ENCODE measurements at regions of chr4 and their contacts with region 1.

Region 1: DNA sequence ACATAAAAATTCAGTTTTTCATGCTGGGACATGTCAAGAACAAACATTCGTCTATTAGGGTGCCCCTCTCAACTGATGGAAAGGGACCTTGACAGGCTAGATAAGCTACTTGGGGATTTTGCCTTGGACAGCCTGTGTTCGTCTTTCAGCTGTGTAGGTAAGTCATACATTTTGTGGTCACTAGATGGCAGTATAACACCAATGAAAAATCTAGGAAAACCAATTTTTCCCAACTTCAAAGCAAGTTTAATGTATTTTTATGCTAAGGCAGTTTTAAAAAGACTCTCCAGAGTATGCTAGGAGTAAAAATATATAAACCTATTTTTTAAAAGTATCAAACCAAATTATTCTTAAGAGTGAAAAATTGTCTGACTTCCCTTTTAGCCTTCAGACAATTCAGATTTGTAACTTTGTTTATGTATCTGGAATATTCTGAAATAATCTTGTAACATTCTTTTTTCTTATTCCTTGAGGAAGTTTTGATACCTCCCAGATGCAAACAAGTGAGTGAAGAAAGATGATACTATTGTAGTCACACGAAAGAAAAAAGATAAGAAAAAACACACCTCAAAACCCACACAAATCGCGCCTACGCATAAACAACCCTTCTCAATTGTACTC is 158.3 kb downstream of the CPE start:
- DNase-seq: no peak
- H3K4me3 ChIP-seq: no peak overlapping the region
- H3K27ac ChIP-seq: no peak overlapping the region
- H3K4me1 ChIP-seq: no peaks in the 10 kb centered on the region
- H3K27me3 ChIP-seq: no peaks in the 10 kb centered on the region
- CTCF ChIP-seq: peak; percentile 29 to 81 (median 73)

Region 2: DNA sequence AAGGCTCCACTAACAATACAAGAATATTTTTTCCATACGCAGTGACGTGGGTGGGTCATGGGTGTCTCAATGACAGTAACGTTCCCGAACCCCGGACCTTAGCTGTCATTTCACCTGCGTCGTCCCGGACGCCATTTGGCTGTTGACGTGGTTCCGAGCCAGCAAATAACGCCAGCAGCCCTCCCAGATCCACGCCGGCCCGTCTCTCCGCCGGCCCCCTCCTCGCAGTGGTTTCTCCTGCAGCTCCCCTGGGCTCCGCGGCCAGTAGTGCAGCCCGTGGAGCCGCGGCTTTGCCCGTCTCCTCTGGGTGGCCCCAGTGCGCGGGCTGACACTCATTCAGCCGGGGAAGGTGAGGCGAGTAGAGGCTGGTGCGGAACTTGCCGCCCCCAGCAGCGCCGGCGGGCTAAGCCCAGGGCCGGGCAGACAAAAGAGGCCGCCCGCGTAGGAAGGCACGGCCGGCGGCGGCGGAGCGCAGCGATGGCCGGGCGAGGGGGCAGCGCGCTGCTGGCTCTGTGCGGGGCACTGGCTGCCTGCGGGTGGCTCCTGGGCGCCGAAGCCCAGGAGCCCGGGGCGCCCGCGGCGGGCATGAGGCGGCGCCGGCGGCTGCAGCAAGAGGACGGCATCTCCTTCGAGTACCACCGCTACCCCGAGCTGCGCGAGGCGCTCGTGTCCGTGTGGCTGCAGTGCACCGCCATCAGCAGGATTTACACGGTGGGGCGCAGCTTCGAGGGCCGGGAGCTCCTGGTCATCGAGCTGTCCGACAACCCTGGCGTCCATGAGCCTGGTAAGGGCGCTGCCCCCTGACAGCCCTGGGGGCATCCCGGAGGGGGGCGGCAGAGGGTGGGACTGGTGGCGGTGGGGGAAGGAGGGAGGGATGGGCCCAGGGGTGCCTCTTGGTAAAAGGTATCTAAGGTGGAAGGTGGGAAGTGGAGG is 158.1 kb before region 1 on chr4 and contains the start of gene CPE:
- intact Hi-C with region 1: no loop called
- DNase-seq: peak; percentile 23 to 94
- H3K4me3 ChIP-seq: peak within 1 kb of the TSS; percentile 75 to 93
- H3K27ac ChIP-seq: peak within 1 kb of the TSS; percentile 87 to 88
- H3K4me1 ChIP-seq: peaks cover 0 to 11% of the 10 kb centered on the region in 2 donors
- H3K27me3 ChIP-seq: no peaks in the 10 kb centered on the region
- CTCF ChIP-seq: peak; percentile 56 to 67 (median 65)
- total RNA-seq, gene CPE: 199 TPM

Region 3: DNA sequence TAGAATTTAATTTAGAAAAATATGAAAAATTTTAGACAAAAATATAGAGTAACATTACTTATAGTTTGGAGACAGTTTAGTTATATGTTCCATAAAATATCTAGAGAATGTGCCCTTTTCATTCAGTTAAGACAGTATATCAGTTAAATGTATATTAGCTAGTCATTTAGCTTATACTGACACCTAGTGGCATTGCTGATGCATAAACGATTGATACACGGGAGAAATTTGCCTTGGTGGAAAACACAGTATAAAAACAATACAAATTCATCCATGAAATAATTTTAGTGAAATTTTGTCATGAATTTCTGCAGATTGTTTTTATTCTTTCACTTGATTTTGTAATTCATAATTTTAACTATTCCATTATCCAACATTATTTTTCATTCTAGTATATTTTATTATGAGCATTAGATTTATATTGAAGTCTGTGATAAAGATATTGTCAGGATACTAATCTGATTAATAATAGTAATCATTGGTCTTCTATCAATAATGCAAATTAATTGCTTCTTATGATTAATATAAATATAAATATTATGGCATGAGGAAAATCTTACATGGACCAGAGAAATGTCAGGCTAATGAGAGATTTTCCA is 554.9 kb after region 1 on chr4:
- intact Hi-C with region 1: loop called (anchors 1 kb)
- DNase-seq: no peak
- H3K4me3 ChIP-seq: no peak overlapping the region
- H3K27ac ChIP-seq: no peak overlapping the region
- H3K4me1 ChIP-seq: no peaks in the 10 kb centered on the region
- H3K27me3 ChIP-seq: no peaks in the 10 kb centered on the region
- CTCF ChIP-seq: peak; percentile 8 to 54 (median 52)

Region 4: DNA sequence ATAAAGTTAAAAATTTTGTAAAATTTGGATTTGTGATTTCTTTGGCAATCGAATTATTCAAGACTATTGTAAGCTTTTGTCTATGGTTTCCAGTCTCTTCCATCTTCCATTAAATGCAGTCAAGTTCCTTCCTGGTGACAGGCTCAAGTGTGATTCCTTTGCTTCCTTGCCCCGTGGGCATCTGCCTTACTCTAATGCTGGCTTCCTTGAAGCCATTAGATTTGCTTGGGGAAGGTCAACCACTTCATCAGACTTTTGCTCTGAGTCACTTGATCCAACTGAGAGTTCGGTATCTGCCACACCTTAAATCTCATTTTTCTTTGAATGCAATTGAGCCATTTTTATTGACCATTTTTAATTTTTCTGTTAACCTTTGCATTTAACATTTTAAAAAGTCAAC is 1048.4 kb after region 1 on chr4:
- intact Hi-C with region 1: loop called (anchors 10 kb)
- DNase-seq: no peak
- H3K4me3 ChIP-seq: no peak overlapping the region
- H3K27ac ChIP-seq: no peak overlapping the region
- H3K4me1 ChIP-seq: no peaks in the 10 kb centered on the region
- H3K27me3 ChIP-seq: no peaks in the 10 kb centered on the region
- CTCF ChIP-seq: no peak

Region 5: GRCh38 chr4:166657261-166657660 is 1120.1 kb after region 1 on chr4:
- intact Hi-C with region 1: no loop called
- DNase-seq: no peak
- H3K4me3 ChIP-seq: no peak overlapping the region
- H3K27ac ChIP-seq: no peak overlapping the region
- H3K4me1 ChIP-seq: no peaks in the 10 kb centered on the region
- H3K27me3 ChIP-seq: no peaks in the 10 kb centered on the region
- CTCF ChIP-seq: no peak

Measured in ascending aorta (tissue), 2 donors.